ENCODE measurements at regions of chr5 and their contacts with region 1.

Region 1: DNA sequence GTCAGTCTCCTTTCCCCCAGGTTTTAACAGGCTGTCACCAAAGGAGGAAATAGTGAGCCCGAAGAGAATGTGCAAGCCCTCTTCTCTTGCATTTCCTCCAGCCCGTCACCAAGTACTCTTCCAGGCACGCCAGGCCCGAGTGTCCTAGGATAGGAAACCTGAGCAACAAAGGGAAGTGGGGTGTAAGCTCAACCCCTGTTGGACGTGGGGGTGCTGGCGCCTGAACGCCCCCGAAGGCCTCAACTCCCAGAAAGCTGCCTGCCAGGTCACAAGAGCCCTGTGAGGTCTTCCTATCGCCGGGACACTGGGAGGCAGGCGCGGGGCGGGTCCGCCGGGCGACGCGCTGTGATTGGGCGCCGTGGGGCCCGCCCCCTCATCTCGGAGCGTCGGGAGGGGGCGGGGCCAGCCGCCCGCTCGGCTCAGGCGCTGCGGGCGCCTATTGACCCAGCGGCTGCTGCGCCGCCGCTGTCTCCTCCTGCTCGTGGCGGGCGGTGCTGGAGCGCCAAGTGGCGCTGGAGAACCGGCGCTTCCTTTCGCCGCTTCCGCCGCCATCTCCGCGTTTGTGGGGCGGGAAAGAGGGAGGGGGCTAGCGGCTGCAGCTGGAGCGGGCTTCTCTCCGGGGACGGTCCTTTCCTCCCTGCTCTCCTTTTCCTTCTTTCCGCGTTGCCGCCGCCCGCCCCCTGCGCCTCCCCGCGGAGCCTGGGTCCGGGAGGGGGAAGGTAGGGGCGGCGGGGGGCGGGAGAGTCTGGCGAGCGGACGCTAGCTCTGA is 572 bp upstream of the MAN2A1 start:
- DNase-seq: peak; percentile 89
- ATAC-seq: peak; percentile 89
- H3K4me3 ChIP-seq: peak overlapping the region; percentile 84 to 91 (median 89)
- H3K27ac ChIP-seq: peak overlapping the region; percentile 90
- H3K4me1 ChIP-seq: peaks cover 38% of the 10 kb centered on the region
- H3K27me3 ChIP-seq: no peaks in the 10 kb centered on the region; a peak in 1 of 5 replicates
- CTCF ChIP-seq: no peak; the same call in none of the 2 replicates
- EP300 ChIP-seq: no peak
- POLR2A ChIP-seq: peak; percentile 92 to 94
- RAD21 ChIP-seq: peak; percentile 49; the same call in 1 of the 2 replicates

Region 2: DNA sequence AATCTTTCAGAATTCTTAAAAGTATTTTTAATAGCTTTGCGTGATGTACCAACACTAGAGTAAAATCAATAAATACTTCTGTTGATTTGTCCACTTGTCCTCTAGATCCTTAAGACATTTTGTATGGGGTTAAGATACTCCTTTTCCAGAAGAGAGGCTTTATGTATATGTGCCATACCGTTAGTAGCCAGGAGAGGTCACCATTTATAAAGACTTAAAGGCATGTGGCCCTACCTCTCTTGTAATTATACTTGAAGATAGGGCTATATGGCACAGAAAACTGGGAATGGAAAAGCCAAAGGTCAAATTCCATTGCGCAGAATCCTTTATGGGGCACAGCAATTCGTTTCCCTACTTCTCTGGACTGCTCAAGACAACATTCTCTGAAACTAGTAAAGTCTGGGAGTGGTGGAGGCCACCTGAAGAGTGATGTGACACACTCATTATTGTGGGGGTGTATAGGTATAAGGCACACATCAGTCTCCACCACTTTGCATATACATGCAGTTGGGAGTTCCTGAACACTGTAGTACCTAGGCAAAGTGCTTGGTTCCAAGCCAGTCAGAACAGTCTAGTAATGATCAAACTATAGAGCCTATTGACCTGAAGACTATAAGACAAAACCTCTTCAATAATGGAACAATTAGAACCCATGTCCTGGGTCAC is 1167.2 kb before region 1 on chr5:
- CTCF ChIA-PET with region 1: no interaction called
- POLR2A ChIA-PET with region 1: no interaction called
- in situ Hi-C with region 1: no loop called
- intact Hi-C with region 1: loop called (anchors 1 kb)
- DNase-seq: peak; percentile 53
- ATAC-seq: peak; percentile 91
- H3K4me3 ChIP-seq: no peak overlapping the region
- H3K27ac ChIP-seq: no peak overlapping the region
- H3K4me1 ChIP-seq: no peaks in the 10 kb centered on the region
- H3K27me3 ChIP-seq: no peaks in the 10 kb centered on the region
- CTCF ChIP-seq: peak; percentile 69
- EP300 ChIP-seq: no peak
- POLR2A ChIP-seq: no peak
- RAD21 ChIP-seq: no peak

Region 3: DNA sequence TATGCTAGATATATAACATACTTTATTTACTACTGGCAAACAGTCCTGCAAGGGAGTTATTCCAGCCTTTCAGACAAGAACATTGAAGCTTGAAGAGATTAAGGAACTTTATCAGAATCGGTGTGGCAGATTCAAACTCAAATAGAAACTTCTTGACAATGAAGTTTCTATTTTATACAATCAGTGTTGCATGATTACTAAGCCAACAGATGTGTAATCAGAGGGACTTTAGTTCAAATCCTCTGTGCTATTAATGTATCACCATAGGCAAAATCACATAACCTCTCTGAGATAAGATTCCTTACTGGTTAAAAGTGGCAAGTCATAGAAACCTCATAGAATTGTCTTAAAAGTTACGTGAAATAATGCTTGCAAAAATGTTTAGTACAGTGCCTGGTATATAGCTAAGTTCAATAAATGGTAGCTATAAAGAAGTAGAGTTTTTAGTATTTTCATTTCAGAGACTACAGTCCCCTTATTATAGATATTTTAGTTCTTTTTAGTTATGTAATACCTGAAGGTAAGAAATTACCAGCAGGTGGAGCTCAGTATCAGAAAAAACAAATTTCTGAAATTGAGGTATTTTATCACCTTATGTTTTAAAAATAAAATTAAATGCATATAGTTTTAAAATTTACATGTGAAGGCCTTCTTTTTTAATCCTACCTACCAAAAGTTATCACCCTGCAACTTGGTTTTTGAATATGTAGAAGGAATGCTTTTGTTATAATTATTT is 769.4 kb before region 1 on chr5:
- CTCF ChIA-PET with region 1: no interaction called
- POLR2A ChIA-PET with region 1: no interaction called
- in situ Hi-C with region 1: loop called (anchors 25 kb)
- intact Hi-C with region 1: loop called (anchors 1 kb)
- DNase-seq: no peak
- ATAC-seq: no peak
- H3K4me3 ChIP-seq: no peak overlapping the region
- H3K27ac ChIP-seq: no peak overlapping the region
- H3K4me1 ChIP-seq: no peaks in the 10 kb centered on the region
- H3K27me3 ChIP-seq: no peaks in the 10 kb centered on the region; a peak in 1 of 5 replicates
- CTCF ChIP-seq: no peak
- EP300 ChIP-seq: no peak
- POLR2A ChIP-seq: no peak
- RAD21 ChIP-seq: no peak

Region 4: GRCh38 chr5:109533751-109534272 is 155.3 kb before region 1 on chr5:
- CTCF ChIA-PET with region 1: no interaction called
- POLR2A ChIA-PET with region 1: interaction called, 10 read pairs
- in situ Hi-C with region 1: no loop called
- intact Hi-C with region 1: loop called (anchors 1 kb)
- DNase-seq: no peak
- ATAC-seq: no peak
- H3K4me3 ChIP-seq: no peak overlapping the region
- H3K27ac ChIP-seq: no peak overlapping the region
- H3K4me1 ChIP-seq: peaks cover 45% of the 10 kb centered on the region
- H3K27me3 ChIP-seq: no peaks in the 10 kb centered on the region
- CTCF ChIP-seq: no peak
- EP300 ChIP-seq: no peak
- POLR2A ChIP-seq: no peak
- RAD21 ChIP-seq: no peak

Region 5: DNA sequence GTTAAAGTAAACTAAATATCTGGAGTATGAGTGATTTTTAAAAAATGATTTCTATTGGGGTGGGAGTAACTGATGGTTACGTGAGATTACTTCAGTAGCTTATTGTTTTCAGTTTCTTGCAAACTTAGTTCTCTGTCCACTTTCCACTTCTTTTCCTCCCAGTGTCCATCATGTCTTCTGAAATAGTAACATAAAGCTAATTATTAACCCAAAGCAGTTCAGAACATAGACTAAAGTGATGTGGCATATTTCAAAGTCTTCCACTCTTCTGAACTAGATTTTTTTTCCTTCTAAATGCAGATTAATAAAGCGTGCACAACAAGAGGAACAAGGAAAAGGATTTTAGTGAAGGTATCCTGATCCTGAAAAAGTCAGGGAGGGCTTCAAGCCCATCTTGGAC is 114.7 kb after region 1 on chr5:
- CTCF ChIA-PET with region 1: no interaction called
- POLR2A ChIA-PET with region 1: no interaction called
- in situ Hi-C with region 1: no loop called
- intact Hi-C with region 1: loop called (anchors 5 kb)
- DNase-seq: peak; percentile 21
- ATAC-seq: peak; percentile 68
- H3K4me3 ChIP-seq: no peak overlapping the region
- H3K27ac ChIP-seq: peak overlapping the region; percentile 45
- H3K4me1 ChIP-seq: peaks cover 17% of the 10 kb centered on the region
- H3K27me3 ChIP-seq: no peaks in the 10 kb centered on the region
- CTCF ChIP-seq: no peak
- EP300 ChIP-seq: no peak
- POLR2A ChIP-seq: no peak
- RAD21 ChIP-seq: no peak

Region 6: GRCh38 chr5:110008131-110008530 is 319.0 kb after region 1 on chr5:
- CTCF ChIA-PET with region 1: no interaction called
- POLR2A ChIA-PET with region 1: interaction called, 5 read pairs
- in situ Hi-C with region 1: loop called (anchors 5 kb)
- intact Hi-C with region 1: loop called (anchors 2 kb)
- DNase-seq: no peak
- ATAC-seq: no peak
- H3K4me3 ChIP-seq: no peak overlapping the region
- H3K27ac ChIP-seq: no peak overlapping the region
- H3K4me1 ChIP-seq: peaks cover 31% of the 10 kb centered on the region
- H3K27me3 ChIP-seq: no peaks in the 10 kb centered on the region
- CTCF ChIP-seq: no peak
- EP300 ChIP-seq: no peak
- POLR2A ChIP-seq: no peak
- RAD21 ChIP-seq: no peak

Region 7: GRCh38 chr5:110346893-110347358 is 657.8 kb after region 1 on chr5:
- CTCF ChIA-PET with region 1: no interaction called
- POLR2A ChIA-PET with region 1: no interaction called
- in situ Hi-C with region 1: loop called (anchors 25 kb)
- intact Hi-C with region 1: loop called (anchors 5 kb)
- DNase-seq: peak; percentile 97
- ATAC-seq: peak; percentile 91
- H3K4me3 ChIP-seq: no peak overlapping the region
- H3K27ac ChIP-seq: peak overlapping the region; percentile 84
- H3K4me1 ChIP-seq: peaks cover 55% of the 10 kb centered on the region
- H3K27me3 ChIP-seq: no peaks in the 10 kb centered on the region
- CTCF ChIP-seq: no peak
- EP300 ChIP-seq: peak; percentile 94 to 97
- POLR2A ChIP-seq: no peak
- RAD21 ChIP-seq: no peak